Activated CD4-positive, alpha-beta T cell treated with anti-CD3 and anti-CD28 coated beads for 36 hours (primary cell): ENCODE measurements at regions of chr2 and their contacts with region 1.

Region 1: DNA sequence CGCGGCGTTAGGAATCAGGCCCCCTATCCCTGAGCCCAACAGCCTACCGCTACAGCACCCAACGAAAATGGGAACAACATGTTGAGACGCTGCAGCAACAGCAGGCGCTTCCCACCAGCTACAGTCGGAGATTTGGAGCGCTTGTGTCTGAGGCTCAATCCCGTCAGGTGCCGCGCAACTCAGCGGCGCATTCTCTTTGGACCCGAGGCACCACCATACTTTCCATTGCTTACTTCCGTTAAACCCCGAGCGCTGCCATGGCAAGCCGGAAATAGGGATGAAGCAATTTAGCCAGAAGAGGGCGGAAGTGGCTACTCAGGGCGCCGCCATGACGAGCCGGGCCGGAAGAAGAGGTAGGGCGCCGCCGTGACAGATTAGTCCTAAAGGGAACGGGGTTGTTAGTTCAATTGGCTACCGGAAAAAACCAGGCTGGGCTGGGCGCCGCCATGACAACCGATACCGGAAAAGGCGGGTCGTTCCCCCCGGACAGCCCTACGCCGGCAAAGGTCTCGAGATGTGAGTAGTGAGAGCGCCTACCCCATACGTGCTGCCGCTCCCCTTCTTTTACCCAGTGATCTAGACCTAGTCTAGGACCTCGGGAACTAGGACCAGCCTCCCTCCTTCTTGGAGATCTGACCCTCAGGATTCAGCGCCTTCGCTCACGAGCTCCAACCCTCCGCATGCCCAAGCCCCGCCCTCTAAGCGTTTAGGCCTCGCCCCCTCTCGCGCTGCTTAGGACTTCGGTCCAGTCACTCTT is at the start of gene CHCHD5:
- DNase-seq: peak; percentile 96
- ATAC-seq: peak; percentile 89
- H3K4me3 Mint-ChIP-seq: peak within 1 kb of the TSS; percentile 95
- H3K27ac Mint-ChIP-seq: peak within 1 kb of the TSS; percentile 93
- H3K4me1 Mint-ChIP-seq: peaks cover 28% of the 10 kb centered on the region
- H3K27me3 Mint-ChIP-seq: no peaks in the 10 kb centered on the region
- total RNA-seq, gene CHCHD5: 34.4 to 37.0 TPM

Region 2: DNA sequence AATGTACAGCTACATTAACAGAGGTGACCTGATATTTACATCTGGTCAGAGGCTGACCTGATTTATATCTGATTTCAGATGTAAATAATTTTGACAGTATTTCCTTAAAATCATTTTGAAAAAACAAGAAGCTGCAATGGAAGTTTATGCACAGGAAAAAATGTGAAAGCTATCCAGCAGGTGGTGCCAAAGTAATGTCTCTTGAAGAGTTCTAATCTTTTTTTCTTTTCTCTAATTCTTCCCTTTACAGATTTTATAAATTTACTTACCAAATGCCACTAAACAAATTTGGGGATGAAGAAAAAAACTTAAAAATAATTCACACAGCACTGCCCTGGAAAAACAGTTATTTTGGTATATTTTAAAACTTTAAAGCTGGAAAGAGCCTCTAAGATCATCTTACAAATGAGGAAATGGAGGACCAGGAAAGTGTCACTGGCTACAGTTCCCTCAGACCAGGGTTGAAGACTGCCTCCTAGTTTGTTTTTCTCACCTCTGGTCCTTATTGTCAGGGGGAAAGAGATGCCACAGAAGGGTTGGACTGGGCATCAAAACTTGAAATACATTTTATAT is 462.5 kb before region 1 on chr2:
- CTCF ChIA-PET with region 1: no interaction called
- POLR2A ChIA-PET with region 1: no interaction called
- intact Hi-C with region 1: loop called in 1 of 2 experiments (anchors 2 kb)
- DNase-seq: peak; percentile 62
- ATAC-seq: no peak
- H3K4me3 Mint-ChIP-seq: no peak overlapping the region
- H3K27ac Mint-ChIP-seq: no peak overlapping the region
- H3K4me1 Mint-ChIP-seq: peaks cover 12% of the 10 kb centered on the region
- H3K27me3 Mint-ChIP-seq: no peaks in the 10 kb centered on the region

Region 3: GRCh38 chr2:112254466-112255239 is 329.7 kb before region 1 on chr2 and contains the start of gene ZC3H8:
- CTCF ChIA-PET with region 1: no interaction called
- POLR2A ChIA-PET with region 1: no interaction called
- intact Hi-C with region 1: loop called (anchors 1 to 5 kb)
- DNase-seq: peak; percentile 98
- ATAC-seq: peak; percentile 92
- H3K4me3 Mint-ChIP-seq: no peak within 1 kb of the TSS
- H3K27ac Mint-ChIP-seq: peak within 1 kb of the TSS; percentile 88
- H3K4me1 Mint-ChIP-seq: peaks cover 19% of the 10 kb centered on the region
- H3K27me3 Mint-ChIP-seq: no peaks in the 10 kb centered on the region
- total RNA-seq, gene ZC3H8: 21.6 to 27.1 TPM

Region 4: GRCh38 chr2:112275306-112275886 is 308.9 kb before region 1 on chr2 and contains the start of gene ZC3H6:
- CTCF ChIA-PET with region 1: no interaction called
- POLR2A ChIA-PET with region 1: no interaction called
- intact Hi-C with region 1: loop called (anchors 1 to 2 kb)
- DNase-seq: peak; percentile 100
- ATAC-seq: peak; percentile 98
- H3K4me3 Mint-ChIP-seq: peak within 1 kb of the TSS; percentile 90
- H3K27ac Mint-ChIP-seq: peak within 1 kb of the TSS; percentile 97
- H3K4me1 Mint-ChIP-seq: peaks cover 26% of the 10 kb centered on the region
- H3K27me3 Mint-ChIP-seq: no peaks in the 10 kb centered on the region
- total RNA-seq, gene ZC3H6: 15.1 to 15.3 TPM

Region 5: DNA sequence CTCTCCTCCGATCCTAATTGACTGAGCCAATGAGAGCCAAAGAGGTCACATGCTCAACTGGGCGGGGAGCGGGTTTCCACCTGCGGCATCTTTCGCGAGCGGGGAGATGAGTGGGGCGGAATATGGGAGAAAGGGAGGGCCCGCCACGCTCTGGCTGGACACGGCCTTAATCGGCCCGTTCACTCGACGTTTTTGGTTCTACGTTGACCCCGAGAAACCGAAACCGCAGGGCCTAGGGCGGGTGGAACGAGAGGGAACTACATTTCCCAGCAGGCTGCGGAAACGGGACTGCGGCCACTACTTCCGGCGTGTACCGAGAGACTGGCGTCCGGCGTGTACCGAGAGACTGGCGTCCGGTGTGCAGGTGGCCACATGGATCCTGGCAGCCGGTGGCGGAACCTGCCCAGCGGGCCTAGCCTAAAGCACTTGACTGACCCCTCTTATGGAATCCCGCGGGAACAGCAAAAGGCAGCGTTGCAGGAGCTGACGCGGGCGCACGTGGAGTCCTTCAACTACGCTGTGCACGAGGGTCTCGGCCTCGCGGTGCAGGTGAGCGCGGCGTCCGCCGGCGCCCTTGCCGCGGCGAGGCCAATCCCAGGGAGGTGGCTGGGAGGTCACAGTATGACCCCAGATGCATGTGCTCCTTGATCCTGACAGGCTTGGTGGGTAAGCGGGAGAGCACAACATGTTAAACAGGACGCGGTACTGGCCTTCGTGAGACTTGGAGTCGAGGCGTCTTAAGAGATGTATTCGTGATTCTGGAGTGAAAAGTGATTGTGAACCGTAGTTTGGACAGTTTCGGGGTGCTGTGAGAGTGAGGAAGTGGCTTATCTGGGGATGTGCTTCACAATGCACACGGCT is 42.0 kb before region 1 on chr2 and contains the start of gene POLR1B:
- CTCF ChIA-PET with region 1: interaction called, 5 read pairs
- POLR2A ChIA-PET with region 1: no interaction called
- intact Hi-C with region 1: loop called (anchors 1 kb)
- DNase-seq: peak; percentile 87
- ATAC-seq: peak; percentile 85
- H3K4me3 Mint-ChIP-seq: no peak within 1 kb of the TSS
- H3K27ac Mint-ChIP-seq: no peak within 1 kb of the TSS
- H3K4me1 Mint-ChIP-seq: peaks cover 18% of the 10 kb centered on the region
- H3K27me3 Mint-ChIP-seq: no peaks in the 10 kb centered on the region
- total RNA-seq, gene POLR1B: 47.0 to 63.3 TPM

Region 6: DNA sequence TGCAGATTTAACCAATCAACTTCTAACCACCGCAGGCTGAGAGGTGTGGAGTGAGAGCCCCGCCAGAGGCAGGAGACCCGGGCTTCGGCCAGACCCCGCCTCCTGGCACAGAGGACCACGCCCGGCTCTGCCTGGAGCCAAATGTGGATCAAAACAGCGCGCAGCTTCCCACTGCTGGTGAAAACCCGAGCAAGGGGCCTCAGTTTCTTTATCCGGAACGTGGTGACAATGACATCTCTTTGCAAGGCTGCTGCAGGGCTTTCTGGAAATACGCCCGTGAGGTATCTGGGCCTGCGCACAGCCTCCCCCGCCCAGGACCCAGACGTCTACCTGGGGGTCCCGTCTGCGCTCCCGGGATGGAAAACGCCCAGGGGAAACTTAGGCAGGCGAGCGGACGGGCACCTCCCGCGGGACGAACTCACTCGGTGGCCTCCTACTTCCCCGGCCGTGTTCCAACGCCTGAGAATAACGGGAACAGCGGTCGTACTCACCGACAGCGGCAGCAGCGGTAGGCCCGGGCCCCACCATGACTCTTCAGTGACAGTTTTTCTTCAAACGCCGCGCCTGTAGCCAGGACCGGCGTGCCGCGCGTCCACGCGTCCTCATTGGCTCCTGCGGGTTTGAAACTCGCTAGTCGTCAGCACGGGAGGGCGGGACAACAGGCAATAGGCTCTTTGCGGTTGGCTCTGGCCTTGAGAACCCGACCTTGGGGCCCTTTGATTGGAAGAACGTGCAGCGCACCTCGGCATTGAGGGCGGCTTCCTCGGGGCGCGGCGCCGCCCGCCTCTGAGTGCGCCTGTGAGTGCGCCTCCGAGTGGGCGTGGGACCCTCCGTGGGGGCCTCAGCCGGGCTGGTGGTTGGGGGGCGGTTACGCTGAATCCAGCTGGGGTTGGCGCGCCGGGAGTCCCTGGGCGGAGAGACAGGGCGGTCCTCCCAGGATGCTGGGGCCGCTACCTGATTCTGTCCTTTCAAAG is 180.0 kb after region 1 on chr2 and contains the start of gene CKAP2L:
- CTCF ChIA-PET with region 1: no interaction called
- POLR2A ChIA-PET with region 1: no interaction called
- intact Hi-C with region 1: loop called in 1 of 2 experiments (anchors 1 kb)
- DNase-seq: peak; percentile 98
- ATAC-seq: peak; percentile 97
- H3K4me3 Mint-ChIP-seq: peak within 1 kb of the TSS; percentile 96
- H3K27ac Mint-ChIP-seq: peak within 1 kb of the TSS; percentile 95
- H3K4me1 Mint-ChIP-seq: peaks cover 25% of the 10 kb centered on the region
- H3K27me3 Mint-ChIP-seq: no peaks in the 10 kb centered on the region
- total RNA-seq, gene CKAP2L: 38.4 to 46.7 TPM